Common myeloid progenitor, CD34-positive (primary cell): ENCODE measurements at regions of chr7 and their contacts with region 1.

Region 1: GRCh38 chr7:98168181-98168905 is 42.9 kb upstream of the BHLHA15 start:
- DNase-seq: peak; percentile 50 to 74 (median 66)
- H3K4me3 ChIP-seq: no peak overlapping the region
- H3K27ac ChIP-seq: no peak overlapping the region
- H3K4me1 ChIP-seq: no peaks in the 10 kb centered on the region
- H3K27me3 ChIP-seq: no peaks in the 10 kb centered on the region

Region 2: DNA sequence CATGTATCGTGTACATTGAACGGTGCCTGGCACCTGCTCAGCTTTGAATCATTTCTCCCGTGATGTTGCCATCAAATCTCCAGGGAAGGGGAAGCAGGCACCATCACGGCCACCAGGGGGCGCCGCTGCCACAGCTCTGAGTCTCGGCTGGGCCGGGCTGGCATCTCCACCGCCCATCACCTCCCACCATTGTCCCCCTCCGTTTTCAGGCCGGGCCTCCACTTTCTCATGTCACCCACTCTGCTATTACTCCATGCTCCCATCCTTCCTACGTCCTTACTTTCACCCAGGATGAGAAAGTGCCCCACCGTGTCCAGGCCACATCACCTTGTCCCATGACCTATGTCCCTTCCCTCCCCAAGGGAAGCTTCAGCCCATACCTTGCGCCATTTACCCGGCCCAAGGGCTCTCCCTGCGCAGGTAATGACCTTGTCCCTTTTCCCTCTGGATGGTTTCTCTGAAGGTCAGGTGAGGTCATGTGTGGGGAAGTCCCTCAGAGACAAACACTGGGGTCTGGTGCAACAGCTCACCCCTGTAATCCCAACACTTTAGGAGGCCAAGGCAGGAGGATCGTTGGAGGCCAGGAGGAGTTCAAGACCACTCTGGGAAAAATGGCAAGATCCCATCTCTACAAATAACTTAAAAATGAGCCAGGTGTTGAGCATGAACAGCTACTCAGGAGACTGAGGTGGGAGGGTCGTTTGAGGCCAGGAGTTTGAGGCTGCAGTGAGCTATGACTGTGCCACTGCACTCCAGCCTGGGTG is 146.6 kb before region 1 on chr7:
- CTCF ChIA-PET with region 1: interaction called, 316 read pairs
- POLR2A ChIA-PET with region 1: no interaction called
- DNase-seq: peak; percentile 52 to 77 (median 73)
- H3K4me3 ChIP-seq: no peak overlapping the region
- H3K27ac ChIP-seq: no peak overlapping the region
- H3K4me1 ChIP-seq: no peaks in the 10 kb centered on the region
- H3K27me3 ChIP-seq: peaks cover 0 to 4% (median 0%) of the 10 kb centered on the region in 5 experiments

Region 3: DNA sequence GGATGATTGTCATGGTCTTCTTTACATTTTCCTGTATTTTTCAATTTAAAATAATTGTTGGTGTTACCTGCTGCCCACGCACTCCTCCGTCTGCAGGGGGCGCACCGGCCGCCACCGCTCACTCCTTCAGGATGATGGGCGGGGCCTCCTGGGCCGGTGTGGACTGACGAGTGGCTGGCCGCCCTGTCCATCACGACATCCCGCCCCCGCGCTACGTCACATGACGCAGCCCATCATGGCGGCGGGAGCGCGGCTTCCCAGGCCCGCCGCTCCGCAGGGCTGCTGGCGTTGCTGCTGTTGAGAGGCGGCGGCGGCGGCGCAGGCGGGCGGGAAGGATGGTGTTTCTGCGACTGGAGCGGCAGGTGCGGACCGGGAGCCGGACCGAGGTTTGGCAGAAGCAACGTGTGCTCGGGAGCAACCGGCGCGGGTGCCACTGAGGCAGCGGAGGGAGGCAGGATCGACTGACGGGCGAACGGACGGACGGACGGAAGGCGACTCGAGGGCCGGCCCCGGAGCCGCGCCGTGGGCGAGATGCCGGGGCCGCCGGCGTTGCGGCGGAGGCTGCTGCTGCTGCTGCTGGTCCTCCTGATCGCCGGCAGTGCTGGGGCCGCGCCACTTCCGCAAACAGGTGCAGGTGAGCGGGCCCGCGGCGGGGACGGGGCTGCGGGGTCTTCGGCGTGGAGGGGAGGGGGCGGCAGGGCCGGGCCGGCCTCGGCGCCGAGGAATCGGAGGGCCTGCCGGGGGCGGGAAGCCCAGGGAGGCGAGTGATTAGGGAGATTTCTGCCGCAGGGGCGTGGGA is 61.5 kb before region 1 on chr7 and contains the start of gene LMTK2:
- CTCF ChIA-PET with region 1: interaction called, 100 read pairs
- POLR2A ChIA-PET with region 1: no interaction called
- DNase-seq: peak; percentile 91 to 95 (median 95)
- H3K4me3 ChIP-seq: peak within 1 kb of the TSS; percentile 82 to 98 (median 92)
- H3K27ac ChIP-seq: peak within 1 kb of the TSS in 1 of 2 experiments; percentile 54
- H3K4me1 ChIP-seq: peaks cover 3 to 11% (median 7%) of the 10 kb centered on the region in 4 experiments
- H3K27me3 ChIP-seq: peaks cover 0 to 3% (median 0%) of the 10 kb centered on the region in 5 experiments

Region 4: GRCh38 chr7:98180751-98181150 is 12.4 kb after region 1 on chr7:
- CTCF ChIA-PET with region 1: interaction called, 17 read pairs
- POLR2A ChIA-PET with region 1: no interaction called
- DNase-seq: no peak
- H3K4me3 ChIP-seq: no peak overlapping the region
- H3K27ac ChIP-seq: no peak overlapping the region
- H3K4me1 ChIP-seq: no peaks in the 10 kb centered on the region
- H3K27me3 ChIP-seq: no peaks in the 10 kb centered on the region

Region 5: DNA sequence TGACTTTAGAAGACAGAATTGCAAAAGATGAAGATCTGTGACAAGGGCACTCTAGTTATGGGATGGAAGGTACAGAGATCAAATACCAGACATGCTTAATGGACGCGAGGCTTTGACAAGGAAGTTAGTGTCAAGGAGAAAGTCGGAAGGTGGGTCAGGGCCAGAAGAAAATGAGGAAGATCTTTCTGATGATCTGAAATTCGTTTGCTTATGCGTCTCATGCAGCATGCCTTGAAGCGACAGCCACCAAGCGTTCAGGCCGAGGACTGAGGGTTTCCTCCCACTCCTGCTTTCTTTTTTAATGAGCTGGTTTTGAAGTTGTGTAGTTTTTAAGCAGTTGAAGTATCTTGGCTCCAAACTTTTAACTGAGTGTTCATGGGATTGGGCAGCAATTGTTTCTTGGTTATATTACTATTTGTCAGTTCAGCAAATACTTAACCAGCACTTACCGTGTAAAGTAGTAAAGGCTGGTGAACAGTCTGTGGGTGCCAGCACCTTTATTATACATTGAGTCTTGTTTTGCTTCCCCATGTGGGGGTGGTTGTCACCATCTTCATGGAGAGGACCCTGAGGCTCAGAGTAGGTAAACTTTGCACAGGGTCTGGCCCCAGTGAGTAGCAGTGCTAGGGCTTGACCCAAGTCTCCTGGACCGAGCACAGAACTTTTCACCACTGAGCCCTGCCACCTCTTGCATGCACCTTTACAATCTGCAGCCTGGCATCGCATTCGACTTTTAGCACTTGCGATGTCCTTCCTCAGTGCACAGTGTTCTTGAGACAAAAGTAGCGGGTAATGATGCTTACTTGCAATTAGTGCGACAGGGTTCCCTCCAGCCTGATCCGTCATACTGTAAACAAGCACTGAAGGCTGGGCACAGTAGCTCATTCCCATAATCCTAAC is 28.6 kb after region 1 on chr7:
- CTCF ChIA-PET with region 1: interaction called, 10 read pairs
- POLR2A ChIA-PET with region 1: no interaction called
- DNase-seq: no peak
- H3K4me3 ChIP-seq: no peak overlapping the region
- H3K27ac ChIP-seq: no peak overlapping the region
- H3K4me1 ChIP-seq: peaks cover 2 to 3% (median 3%) of the 10 kb centered on the region in 4 experiments
- H3K27me3 ChIP-seq: no peaks in the 10 kb centered on the region